Activated CD4-positive, alpha-beta memory T cell treated with anti-CD3 and anti-CD28 coated beads for 36 hours (primary cell): ENCODE measurements at regions of chr6 and their contacts with region 1.

Region 1: GRCh38 chr6:142155895-142156757 is 9.1 kb downstream of the VTA1 start:
- DNase-seq: no peak
- H3K4me3 Mint-ChIP-seq: no peak overlapping the region
- H3K27ac Mint-ChIP-seq: no peak overlapping the region
- H3K4me1 Mint-ChIP-seq: peaks cover 54% of the 10 kb centered on the region
- H3K27me3 Mint-ChIP-seq: no peaks in the 10 kb centered on the region

Region 2: DNA sequence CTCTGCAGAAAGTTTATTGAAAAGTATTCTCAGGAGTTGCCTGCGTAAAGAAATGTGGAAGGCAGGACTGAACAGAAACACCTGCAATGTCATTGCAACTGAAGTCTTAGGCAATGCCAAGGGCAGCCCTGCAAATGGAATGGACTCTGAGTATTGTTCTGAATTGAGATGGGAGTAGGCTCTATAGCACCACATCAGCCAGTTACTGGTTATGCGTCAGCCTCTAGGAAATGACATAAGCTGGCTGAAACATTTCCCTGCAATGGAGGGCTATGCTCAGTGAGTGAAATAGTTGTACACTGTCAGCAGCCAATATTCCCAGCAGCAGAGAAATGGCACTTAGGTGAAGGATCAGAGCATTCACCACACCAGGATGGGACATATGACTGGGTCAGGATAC is 37.2 kb before region 1 on chr6:
- CTCF ChIA-PET with region 1: no interaction called
- POLR2A ChIA-PET with region 1: no interaction called
- intact Hi-C with region 1: no loop called
- DNase-seq: no peak
- H3K4me3 Mint-ChIP-seq: no peak overlapping the region
- H3K27ac Mint-ChIP-seq: no peak overlapping the region
- H3K4me1 Mint-ChIP-seq: no peaks in the 10 kb centered on the region
- H3K27me3 Mint-ChIP-seq: no peaks in the 10 kb centered on the region

Region 3: GRCh38 chr6:142167486-142167885 is 11.4 kb after region 1 on chr6:
- CTCF ChIA-PET with region 1: interaction called, 30 read pairs
- POLR2A ChIA-PET with region 1: no interaction called
- intact Hi-C with region 1: no loop called
- DNase-seq: no peak
- H3K4me3 Mint-ChIP-seq: no peak overlapping the region
- H3K27ac Mint-ChIP-seq: no peak overlapping the region
- H3K4me1 Mint-ChIP-seq: peaks cover 9% of the 10 kb centered on the region
- H3K27me3 Mint-ChIP-seq: no peaks in the 10 kb centered on the region

Region 4: GRCh38 chr6:142195862-142196541 is 39.9 kb after region 1 on chr6:
- CTCF ChIA-PET with region 1: interaction called, 10 read pairs
- POLR2A ChIA-PET with region 1: no interaction called
- intact Hi-C with region 1: no loop called
- DNase-seq: no peak
- H3K4me3 Mint-ChIP-seq: no peak overlapping the region
- H3K27ac Mint-ChIP-seq: no peak overlapping the region
- H3K4me1 Mint-ChIP-seq: peaks cover 29% of the 10 kb centered on the region
- H3K27me3 Mint-ChIP-seq: no peaks in the 10 kb centered on the region

Region 5: GRCh38 chr6:142207265-142207877 is 51.2 kb after region 1 on chr6:
- CTCF ChIA-PET with region 1: interaction called, 28 read pairs
- POLR2A ChIA-PET with region 1: no interaction called
- intact Hi-C with region 1: loop called (anchors 1 kb)
- DNase-seq: peak; percentile 49
- H3K4me3 Mint-ChIP-seq: no peak overlapping the region
- H3K27ac Mint-ChIP-seq: no peak overlapping the region
- H3K4me1 Mint-ChIP-seq: no peaks in the 10 kb centered on the region
- H3K27me3 Mint-ChIP-seq: no peaks in the 10 kb centered on the region